Caco-2 (cell line): ENCODE measurements at regions of chr13 and their contacts with region 1.

Region 1: DNA sequence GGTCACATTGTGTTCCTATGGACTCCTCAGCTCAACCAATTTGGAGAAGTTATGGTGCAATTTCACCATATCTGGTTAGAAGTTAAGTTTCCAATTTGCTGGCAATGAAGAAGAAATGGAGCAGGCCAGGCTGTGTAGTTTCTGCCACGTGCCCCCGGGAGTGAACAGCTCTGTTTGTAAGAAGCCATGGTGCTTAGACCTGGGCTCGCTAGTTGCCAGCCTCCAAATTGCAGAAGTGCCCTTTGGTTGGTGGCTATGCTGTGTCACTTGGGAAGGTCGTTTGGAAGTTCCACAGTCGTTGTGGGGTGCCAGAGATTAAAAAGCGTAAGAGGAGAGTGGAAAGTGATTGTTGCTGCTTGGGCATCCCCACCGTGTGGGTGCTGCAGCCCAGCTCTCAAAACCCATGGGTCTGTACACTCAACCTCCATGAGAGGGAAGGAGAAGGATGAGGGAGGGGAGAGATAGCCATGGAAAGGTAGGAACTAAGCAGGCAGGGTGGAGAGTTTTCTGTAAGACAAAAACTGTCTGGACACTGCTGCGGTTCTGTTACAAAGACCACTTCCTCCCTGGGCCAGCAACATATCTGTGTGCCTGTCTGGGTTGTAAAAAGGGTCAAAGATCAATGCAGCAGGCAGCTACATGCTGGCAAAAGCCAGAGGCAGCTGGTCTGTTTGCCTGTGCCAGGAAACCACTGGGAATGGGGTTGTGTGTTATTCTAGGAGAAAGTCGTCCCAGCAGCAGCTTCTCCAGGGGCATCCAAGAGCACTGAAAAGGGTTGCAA is 10.8 kb downstream of the ALOX5AP start:
- DNase-seq: peak; percentile 57 to 77
- H3K4me3 ChIP-seq: no peak overlapping the region
- H3K4me3 Mint-ChIP-seq: no peak overlapping the region
- H3K27ac Mint-ChIP-seq: no peak overlapping the region
- H3K4me1 ChIP-seq: peaks cover 47% of the 10 kb centered on the region
- H3K4me1 Mint-ChIP-seq: peaks cover 29% of the 10 kb centered on the region
- H3K27me3 ChIP-seq: no peaks in the 10 kb centered on the region
- H3K27me3 Mint-ChIP-seq: no peaks in the 10 kb centered on the region
- CTCF ChIP-seq: no peak

Region 2: GRCh38 chr13:30763786-30764413 is 17.8 kb after region 1 on chr13:
- CTCF ChIA-PET with region 1: interaction called, 3 read pairs
- POLR2A ChIA-PET with region 1: no interaction called
- intact Hi-C with region 1: loop called (anchors 1 kb)
- DNase-seq: no peak
- H3K4me3 ChIP-seq: no peak overlapping the region
- H3K4me3 Mint-ChIP-seq: no peak overlapping the region
- H3K27ac Mint-ChIP-seq: no peak overlapping the region
- H3K4me1 ChIP-seq: peaks cover 22% of the 10 kb centered on the region
- H3K4me1 Mint-ChIP-seq: peaks cover 19% of the 10 kb centered on the region
- H3K27me3 ChIP-seq: no peaks in the 10 kb centered on the region
- H3K27me3 Mint-ChIP-seq: no peaks in the 10 kb centered on the region
- CTCF ChIP-seq: no peak